ENCODE measurements at regions of chr2 and their contacts with region 1.

Region 1: GRCh38 chr2:112275306-112275886 is at the start of gene ZC3H6:
- DNase-seq: peak; percentile 100
- H3K4me3 Mint-ChIP-seq: peak within 1 kb of the TSS; percentile 93
- H3K27ac Mint-ChIP-seq: peak within 1 kb of the TSS; percentile 98
- H3K4me1 Mint-ChIP-seq: peaks cover 10% of the 10 kb centered on the region
- H3K27me3 Mint-ChIP-seq: no peaks in the 10 kb centered on the region
- total RNA-seq, gene ZC3H6: 8.0 and 8.2 TPM in 2 replicates

Region 2: DNA sequence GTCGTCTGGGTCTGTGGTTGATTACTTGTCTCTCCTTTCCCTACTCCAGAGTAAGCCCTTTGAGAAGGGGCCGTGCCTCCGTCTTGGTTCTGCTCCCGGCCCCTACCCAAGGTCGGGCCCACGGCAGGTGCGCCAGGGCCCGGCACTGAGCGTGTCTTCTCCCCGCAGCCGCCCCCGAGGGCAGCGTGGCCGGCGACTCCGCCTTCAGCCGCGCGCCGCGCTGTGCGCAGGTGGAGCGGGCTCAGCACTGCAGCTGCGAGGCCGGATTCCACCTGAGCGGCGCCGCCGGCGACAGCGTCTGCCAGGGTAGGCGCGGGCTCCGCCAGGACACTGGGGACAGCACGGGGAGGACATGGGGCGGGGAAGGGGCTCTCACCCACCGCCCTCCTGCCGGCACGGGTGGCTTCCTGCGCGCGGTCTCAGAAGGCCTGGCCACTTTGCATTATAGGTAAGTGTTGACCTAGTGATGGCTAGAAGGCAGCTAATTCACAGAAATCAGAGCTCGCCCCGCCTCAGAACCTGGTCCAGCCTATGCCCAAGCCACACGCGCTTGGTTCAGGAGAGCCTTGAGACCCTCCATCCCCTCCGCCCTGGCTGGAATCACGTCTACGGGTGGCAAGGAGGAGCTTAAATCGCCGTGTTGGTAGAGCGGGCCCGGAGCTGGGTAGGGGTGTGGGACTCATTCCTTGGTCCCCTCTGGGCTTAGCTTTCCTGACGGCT is 93.7 kb before region 1 on chr2:
- intact Hi-C with region 1: loop called (anchors 2 kb)
- DNase-seq: peak; percentile 43
- H3K4me3 Mint-ChIP-seq: peak overlapping the region; percentile 80
- H3K27ac Mint-ChIP-seq: peak overlapping the region; percentile 93
- H3K4me1 Mint-ChIP-seq: peaks cover 38% of the 10 kb centered on the region
- H3K27me3 Mint-ChIP-seq: no peaks in the 10 kb centered on the region

Region 3: GRCh38 chr2:112220831-112221230 is 54.6 kb before region 1 on chr2:
- intact Hi-C with region 1: no loop called
- DNase-seq: no peak
- H3K4me3 Mint-ChIP-seq: no peak overlapping the region
- H3K27ac Mint-ChIP-seq: no peak overlapping the region
- H3K4me1 Mint-ChIP-seq: peaks cover 9% of the 10 kb centered on the region
- H3K27me3 Mint-ChIP-seq: no peaks in the 10 kb centered on the region

Region 4: DNA sequence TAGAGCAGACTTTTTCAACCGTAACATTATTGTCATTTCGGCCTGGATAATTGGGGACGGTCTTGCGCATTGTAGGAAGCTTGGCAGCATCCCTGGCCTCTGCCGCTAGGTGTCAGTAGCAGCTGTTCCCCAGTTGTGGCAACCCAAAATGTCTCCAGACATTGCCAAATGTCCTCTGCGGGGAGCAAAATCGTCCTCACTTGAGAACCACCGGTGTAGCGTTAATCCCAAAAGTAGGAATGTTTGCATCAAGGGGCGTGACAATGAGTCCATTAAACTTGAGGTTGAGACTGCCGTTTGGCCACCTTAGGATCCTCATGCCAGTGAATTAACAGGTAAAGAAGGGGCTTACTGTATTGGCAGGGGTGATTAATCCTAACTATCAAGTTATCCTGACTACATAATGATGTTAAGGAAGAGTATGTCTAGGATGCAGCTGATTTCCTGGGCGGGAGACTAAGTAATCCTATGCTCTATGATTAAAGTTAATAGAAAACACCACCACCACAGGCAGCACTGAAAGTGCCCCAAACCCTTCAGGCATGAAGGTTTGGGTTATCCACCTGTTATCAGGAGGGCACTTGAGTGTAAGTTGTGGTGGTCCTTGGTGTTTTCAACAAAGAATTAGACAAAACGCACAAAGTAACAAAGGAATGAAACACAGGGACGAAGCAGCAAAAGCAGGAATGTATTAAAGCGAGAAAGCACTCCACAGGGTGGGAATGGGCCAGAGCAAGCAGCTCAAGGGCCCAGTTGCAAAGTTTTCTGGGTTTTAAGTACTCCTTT is 15.7 kb before region 1 on chr2:
- intact Hi-C with region 1: loop called (anchors 1 kb)
- DNase-seq: peak; percentile 72
- H3K4me3 Mint-ChIP-seq: peak overlapping the region; percentile 0
- H3K27ac Mint-ChIP-seq: peak overlapping the region; percentile 61
- H3K4me1 Mint-ChIP-seq: peaks cover 15% of the 10 kb centered on the region
- H3K27me3 Mint-ChIP-seq: peaks cover 1% of the 10 kb centered on the region

Measured in activated T-helper 2 cell treated with anti-CD3 and anti-CD28 coated beads, Interferon-gamma antibody, Interleukin-2, Interleukin-4, amounts not matched to agents 10 μg/mL and 5 μg/mL and 100 μg/mL, durations not matched to agents 14 hours and 24 hours and 36 hours (primary cell).